ENCODE measurements at regions of chr3 and their contacts with region 1.

Region 1: DNA sequence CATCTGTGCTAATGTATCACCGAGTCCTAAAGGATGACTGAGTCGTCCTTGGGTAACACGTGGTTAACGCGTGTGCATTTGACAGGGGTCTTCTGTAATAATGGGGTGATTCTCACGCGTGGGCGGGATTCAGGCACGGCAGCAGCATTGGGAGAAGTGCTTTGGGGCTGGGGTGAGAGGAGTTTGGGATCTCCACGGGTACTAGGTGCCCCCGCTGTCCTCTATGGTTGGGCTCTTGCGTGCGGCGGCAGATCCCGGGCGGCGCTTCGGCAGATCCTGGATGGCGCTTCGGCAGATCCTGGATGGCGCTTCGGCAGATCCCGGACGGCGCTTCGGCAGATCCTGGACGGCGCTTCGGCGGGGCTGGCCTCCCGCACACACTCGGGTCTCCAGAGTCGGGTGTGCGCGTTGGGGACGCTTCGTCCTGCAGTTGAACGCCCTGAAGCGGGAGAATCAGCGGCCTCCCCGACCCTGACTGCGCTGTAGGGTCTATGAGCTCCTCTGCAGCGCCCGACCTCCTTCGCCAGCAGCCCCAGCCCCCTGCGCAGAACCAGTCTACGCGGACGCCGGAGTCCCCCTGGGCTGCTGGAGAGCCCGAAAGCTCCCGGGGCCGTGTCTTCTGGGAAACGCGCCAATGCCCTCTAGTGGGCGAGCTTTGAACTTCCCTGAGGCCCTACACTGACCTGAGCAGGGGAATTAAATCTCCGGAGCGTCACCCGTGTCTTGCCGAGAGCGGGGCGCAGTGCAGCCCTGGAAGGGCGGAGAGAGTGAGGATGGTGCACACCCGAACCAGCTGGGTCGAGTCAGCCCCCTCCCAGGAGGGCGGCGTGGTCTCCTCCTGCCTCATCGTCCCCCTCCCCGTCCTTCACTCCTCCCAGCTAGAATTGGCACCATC is 48.1 kb upstream of the EPHB3 start:
- DNase-seq: peak; percentile 91
- H3K27ac ChIP-seq: no peak overlapping the region
- CTCF ChIP-seq: peak; percentile 89

Region 2: DNA sequence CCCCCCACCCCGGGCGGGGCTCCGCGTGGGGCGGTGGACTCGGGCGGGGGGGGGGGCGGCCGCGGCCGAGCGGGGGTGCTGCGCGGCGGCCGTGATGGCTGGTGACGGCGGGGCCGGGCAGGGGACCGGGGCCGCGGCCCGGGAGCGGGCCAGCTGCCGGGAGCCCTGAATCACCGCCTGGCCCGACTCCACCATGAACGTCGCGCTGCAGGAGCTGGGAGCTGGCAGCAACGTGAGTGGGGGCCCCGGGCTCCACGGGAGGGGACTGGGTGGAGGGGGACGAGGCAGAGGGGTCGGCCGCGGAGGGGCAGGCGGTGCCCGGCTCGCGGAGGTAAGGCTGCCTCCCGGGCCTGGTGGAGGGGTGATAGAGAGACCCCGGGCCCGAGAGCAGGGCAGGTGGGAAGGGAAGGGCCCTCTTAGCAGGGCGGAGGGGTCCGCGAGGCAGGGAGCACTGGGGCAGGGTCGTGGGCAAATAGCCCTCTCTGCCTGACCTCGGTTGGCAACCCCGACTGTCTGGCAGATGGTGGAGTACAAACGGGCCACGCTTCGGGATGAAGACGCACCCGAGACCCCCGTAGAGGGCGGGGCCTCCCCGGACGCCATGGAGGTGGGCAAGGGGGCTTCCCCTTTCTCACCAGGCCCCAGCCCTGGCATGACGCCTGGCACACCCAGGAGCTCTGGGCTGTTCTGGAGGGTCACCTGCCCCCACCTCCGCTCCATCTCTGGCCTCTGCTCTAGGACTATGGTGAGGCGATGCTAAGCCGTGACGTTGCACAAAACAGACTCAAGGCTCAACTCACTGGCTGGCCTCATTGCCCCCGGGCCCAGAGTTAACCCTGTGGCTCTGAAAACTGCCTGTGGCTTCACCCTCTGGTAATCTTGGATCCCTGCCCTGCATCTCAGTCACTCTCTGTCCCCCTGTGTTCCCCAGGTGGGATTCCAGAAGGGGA is 237.3 kb before region 1 on chr3 and contains the start of gene ECE2:
- CTCF ChIA-PET with region 1: no interaction called
- POLR2A ChIA-PET with region 1: no interaction called
- DNase-seq: no peak
- H3K27ac ChIP-seq: no peak within 1 kb of the TSS
- CTCF ChIP-seq: no peak

Region 3: DNA sequence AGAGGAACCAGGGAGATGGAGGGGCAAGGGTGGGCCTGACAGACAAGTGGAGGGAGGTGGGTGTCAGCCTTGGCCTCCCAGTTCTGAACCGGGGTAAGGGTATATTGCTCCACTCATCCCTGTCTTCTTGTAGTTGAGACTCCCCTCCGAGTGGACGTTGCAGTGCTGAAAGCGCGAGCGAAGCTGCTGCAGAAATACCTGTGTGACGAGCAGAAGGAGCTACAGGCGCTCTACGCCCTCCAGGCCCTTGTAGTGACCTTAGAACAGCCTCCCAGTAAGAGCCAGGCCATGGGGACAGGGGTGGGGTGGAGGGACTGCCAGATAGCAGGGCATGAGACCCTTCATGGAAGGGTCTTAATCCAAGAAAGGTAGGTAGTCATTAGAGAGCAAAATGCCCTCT is 181.7 kb before region 1 on chr3:
- CTCF ChIA-PET with region 1: no interaction called
- POLR2A ChIA-PET with region 1: no interaction called
- DNase-seq: no peak
- H3K27ac ChIP-seq: peak overlapping the region; percentile 94
- CTCF ChIP-seq: no peak

Region 4: GRCh38 chr3:184371570-184372018 is 141.9 kb before region 1 on chr3:
- CTCF ChIA-PET with region 1: interaction called, 20 read pairs
- POLR2A ChIA-PET with region 1: no interaction called
- DNase-seq: peak; percentile 86
- H3K27ac ChIP-seq: no peak overlapping the region
- CTCF ChIP-seq: peak; percentile 94

Region 5: DNA sequence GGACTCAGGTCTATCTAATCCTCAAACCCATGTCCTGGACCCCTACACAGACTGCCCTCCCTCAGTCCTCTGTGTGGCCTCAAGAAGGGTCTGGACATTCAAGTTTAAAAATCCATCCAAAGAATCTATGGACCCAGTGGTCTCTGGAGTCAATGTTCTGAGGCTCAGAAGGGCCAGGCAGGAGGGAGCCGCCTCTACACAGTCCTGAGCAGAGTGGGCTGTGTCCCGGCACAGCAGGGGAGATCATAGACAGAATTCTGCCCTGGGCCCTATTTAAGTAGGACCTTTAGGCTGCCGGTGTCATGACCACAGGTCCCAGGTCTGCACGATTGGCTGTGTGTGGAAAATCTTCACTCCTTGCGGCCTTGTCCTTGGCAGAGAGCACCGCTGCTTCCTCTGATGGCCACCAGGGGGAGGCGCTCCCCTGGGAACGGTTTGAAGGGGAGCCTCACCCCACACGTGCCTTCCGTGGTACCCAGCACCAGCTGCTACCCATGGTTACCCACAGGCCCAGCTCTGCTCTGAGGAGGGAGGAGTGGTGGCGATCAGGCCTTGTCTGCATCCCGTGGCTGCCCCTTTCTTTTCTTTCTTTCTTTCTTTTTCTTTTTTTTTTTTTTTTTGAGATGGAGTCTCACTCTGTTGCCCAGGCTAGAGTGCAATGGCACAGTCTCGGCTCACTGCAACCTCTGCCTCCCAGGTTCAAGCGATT is 95.8 kb before region 1 on chr3:
- CTCF ChIA-PET with region 1: interaction called, 23 read pairs
- POLR2A ChIA-PET with region 1: no interaction called
- DNase-seq: peak; percentile 73
- H3K27ac ChIP-seq: no peak overlapping the region
- CTCF ChIP-seq: peak; percentile 85

Region 6: DNA sequence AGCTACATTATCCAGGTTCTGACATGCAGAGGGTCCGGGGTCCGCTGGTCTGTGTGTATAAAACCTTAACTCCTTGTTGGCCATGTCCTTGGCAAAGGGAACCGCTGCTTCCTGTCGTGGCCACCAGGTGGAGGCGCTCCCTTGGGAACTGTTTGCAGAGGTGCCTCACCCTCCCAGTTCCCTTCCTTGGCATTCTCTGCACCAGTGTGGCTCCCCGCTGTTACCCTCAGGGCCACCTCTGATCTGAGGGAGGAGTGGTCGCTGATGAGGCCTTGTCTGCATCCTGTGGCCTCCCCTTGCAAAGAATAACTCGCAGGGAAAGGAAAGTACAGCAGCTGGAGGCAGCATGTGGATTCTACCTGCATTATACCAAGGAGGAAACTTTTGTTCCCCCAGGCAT is 44.1 kb before region 1 on chr3:
- CTCF ChIA-PET with region 1: interaction called, 14 read pairs
- POLR2A ChIA-PET with region 1: no interaction called
- DNase-seq: peak; percentile 45
- H3K27ac ChIP-seq: no peak overlapping the region
- CTCF ChIP-seq: peak; percentile 46

Region 7: GRCh38 chr3:184525337-184526087 is 12.0 kb after region 1 on chr3:
- CTCF ChIA-PET with region 1: interaction called, 13 read pairs
- POLR2A ChIA-PET with region 1: no interaction called
- DNase-seq: no peak
- H3K27ac ChIP-seq: no peak overlapping the region
- CTCF ChIP-seq: no peak

Region 8: DNA sequence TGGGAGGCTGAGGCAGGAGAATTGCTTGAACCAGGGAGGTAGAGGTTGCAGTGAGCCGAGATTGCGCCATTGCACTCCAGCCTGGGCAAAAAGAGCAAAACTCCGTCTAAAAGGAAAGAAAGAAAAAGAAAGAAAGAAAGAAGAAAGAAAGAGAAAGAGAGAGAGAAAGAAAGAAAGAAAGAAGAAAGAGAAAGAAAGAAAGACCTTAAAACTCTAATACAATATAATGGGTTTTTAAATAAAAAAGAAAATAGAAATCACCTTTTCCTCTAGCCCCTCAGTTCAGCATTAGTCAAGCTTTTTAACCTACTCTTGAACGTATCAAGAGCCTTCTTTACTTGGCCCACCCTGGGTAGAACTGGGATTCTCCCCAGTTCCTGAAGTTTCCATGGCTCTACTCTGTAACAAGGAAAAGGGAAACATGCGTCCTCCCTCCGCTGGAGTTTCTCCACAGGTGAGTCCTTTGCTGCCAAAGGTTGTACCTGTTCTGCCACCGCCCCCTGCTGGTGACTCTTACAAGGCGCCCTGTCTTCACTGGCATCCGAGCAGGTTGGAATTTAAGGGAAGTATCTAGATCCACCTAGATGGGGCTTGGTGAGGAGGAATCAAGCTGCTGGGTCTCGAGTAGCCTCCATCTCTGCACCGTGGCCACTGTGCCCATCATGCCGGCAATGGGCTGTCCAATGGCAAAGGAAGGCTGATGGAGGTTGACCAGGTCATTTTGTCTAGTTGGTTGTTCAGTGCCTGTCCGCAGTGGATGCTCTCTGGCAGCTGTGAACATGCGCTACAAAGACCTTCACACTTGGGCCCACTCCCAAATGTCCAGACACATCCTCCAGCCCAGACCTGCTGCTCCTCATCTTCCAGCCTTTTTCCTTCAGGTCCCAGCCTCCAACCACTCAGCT is 27.5 kb after region 1 on chr3:
- CTCF ChIA-PET with region 1: interaction called, 25 read pairs
- POLR2A ChIA-PET with region 1: no interaction called
- DNase-seq: peak; percentile 68
- H3K27ac ChIP-seq: no peak overlapping the region
- CTCF ChIP-seq: peak; percentile 66

Measured in RWPE1 (cell line).